Activated CD8-positive, alpha-beta T cell treated with anti-CD3 and anti-CD28 coated beads for 36 hours (primary cell): ENCODE measurements at regions of chr2 and their contacts with region 1.

Region 1: GRCh38 chr2:27322766-27323595 is at the start of gene MPV17:
- DNase-seq: peak; percentile 94
- ATAC-seq: peak; percentile 97
- H3K4me3 Mint-ChIP-seq: peak within 1 kb of the TSS; percentile 97
- H3K27ac Mint-ChIP-seq: peak within 1 kb of the TSS; percentile 97
- H3K4me1 Mint-ChIP-seq: peaks cover 21% of the 10 kb centered on the region
- H3K27me3 Mint-ChIP-seq: no peaks in the 10 kb centered on the region
- CTCF ChIP-seq: no peak
- total RNA-seq, gene MPV17: 72.3 to 85.1 TPM

Region 2: DNA sequence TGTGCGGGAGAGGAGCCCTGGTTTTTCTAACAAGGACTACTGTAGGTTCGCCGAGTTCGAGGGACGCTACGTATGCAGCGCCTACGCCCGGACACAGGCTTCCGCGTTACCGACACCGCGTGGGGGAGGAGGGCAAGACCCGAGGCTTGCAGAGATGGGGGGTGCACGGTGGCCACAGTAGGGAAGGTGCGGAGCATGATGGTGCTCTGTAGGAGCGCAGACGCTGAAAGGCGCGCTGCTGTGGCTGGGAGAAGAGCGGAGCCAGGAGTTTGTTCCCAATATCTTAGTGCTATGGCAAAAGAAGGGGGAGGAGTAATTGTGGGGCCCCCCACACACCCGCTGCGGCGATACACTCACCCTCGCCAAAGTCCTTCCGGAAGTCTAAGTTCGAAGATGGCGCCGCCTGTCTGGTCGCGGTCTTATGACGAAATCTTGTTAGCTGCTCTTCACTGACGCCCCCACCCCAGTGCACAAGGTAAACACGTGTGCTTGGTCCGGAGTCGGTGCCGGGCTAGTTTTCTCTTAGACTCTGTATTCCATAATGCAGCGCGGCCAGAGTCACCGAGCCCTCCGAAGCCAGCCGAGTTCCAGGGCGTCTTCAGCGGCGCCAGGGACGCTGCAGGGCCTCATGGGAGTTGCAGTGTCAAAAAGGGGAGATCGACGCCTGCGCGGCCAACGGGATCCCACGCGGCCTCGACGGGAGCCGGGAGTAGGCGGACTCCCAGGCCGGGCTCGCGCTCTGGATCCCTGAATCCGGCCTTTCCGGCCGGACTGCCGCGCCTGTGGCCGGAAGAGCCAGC is 33.6 kb after region 1 on chr2 and contains the start of gene GTF3C2:
- CTCF ChIA-PET with region 1: no interaction called
- POLR2A ChIA-PET with region 1: interaction called, 7 read pairs
- intact Hi-C with region 1: loop called (anchors 5 kb)
- DNase-seq: peak; percentile 98
- ATAC-seq: peak; percentile 79
- H3K4me3 Mint-ChIP-seq: peak within 1 kb of the TSS; percentile 94
- H3K27ac Mint-ChIP-seq: peak within 1 kb of the TSS; percentile 99
- H3K4me1 Mint-ChIP-seq: peaks cover 48% of the 10 kb centered on the region
- H3K27me3 Mint-ChIP-seq: no peaks in the 10 kb centered on the region
- CTCF ChIP-seq: no peak
- total RNA-seq, gene GTF3C2: 57.6 to 63.6 TPM